CD4-positive, alpha-beta T cell (primary cell): ENCODE measurements at regions of chr17 and their contacts with region 1.

Region 1: GRCh38 chr17:28371245-28372202 is at the start of gene SARM1:
- DNase-seq: peak; percentile 53 to 92 (median 74)
- ATAC-seq: peak; percentile 85
- H3K4me3 ChIP-seq: peak within 1 kb of the TSS; percentile 83
- H3K4me3 Mint-ChIP-seq: peak within 1 kb of the TSS; percentile 98
- H3K27ac ChIP-seq: peak within 1 kb of the TSS; percentile 59 to 91
- H3K27ac Mint-ChIP-seq: peak within 1 kb of the TSS; percentile 75
- H3K4me1 ChIP-seq: peaks cover 22% of the 10 kb centered on the region
- H3K4me1 Mint-ChIP-seq: peaks cover 26% of the 10 kb centered on the region
- H3K27me3 ChIP-seq: no peaks in the 10 kb centered on the region
- H3K27me3 Mint-ChIP-seq: no peaks in the 10 kb centered on the region
- CTCF ChIP-seq: no peak
- total RNA-seq, gene SARM1: 12.5 to 15.4 TPM

Region 2: DNA sequence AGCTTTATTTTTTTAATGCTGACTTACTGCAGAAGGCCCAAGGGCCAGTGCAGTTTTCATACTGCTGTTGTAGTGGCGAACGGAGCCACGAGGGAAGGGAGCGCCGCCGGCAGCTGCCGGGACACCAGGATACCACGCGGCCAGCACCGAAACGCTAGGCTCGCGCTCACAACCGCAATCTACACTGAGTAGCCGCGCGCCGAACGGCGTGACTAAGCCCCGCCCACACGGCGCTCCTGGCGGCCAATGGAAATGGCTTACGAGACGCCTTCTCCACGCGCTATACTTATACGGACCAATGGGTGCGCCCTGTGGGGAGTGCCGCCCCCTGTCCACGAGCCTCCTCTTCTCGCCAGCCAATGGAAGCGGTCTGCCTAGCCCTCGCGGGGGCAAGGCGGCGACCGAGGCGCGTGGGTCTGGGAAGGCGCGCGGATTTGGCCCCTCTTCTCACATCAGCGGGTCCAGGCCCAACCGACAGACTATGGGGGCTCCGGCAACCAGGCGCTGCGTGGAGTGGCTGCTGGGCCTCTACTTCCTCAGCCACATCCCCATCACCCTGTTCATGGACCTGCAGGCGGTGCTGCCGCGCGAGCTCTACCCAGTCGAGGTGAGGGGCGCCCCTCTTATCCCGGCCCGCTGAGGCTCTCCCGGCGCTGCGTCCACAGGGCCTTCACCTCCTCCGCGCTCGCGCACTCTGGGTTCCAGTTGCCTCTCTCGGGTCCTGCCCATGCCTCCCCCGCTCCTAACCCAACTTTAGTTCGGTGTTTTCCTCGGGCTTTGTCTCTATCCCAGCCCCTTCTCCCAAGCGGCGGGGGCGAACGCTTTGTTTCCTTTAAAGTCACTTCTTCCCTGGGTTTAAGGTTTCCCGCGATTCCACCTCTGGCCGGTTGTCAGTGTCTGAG is 52.5 kb before region 1 on chr17 and contains the start of gene TMEM97:
- CTCF ChIA-PET with region 1: no interaction called
- POLR2A ChIA-PET with region 1: interaction called, 6 read pairs
- intact Hi-C with region 1: loop called in 1 of 2 experiments (anchors 2 kb)
- DNase-seq: peak; percentile 84 to 97 (median 92)
- ATAC-seq: peak; percentile 98
- H3K4me3 ChIP-seq: peak within 1 kb of the TSS; percentile 73
- H3K4me3 Mint-ChIP-seq: peak within 1 kb of the TSS; percentile 96
- H3K27ac ChIP-seq: no peak within 1 kb of the TSS
- H3K27ac Mint-ChIP-seq: peak within 1 kb of the TSS; percentile 79
- H3K4me1 ChIP-seq: peaks cover 20% of the 10 kb centered on the region
- H3K4me1 Mint-ChIP-seq: peaks cover 24% of the 10 kb centered on the region
- H3K27me3 ChIP-seq: no peaks in the 10 kb centered on the region
- H3K27me3 Mint-ChIP-seq: no peaks in the 10 kb centered on the region
- CTCF ChIP-seq: no peak
- total RNA-seq, gene TMEM97: 2.6 to 3.7 TPM

Region 3: DNA sequence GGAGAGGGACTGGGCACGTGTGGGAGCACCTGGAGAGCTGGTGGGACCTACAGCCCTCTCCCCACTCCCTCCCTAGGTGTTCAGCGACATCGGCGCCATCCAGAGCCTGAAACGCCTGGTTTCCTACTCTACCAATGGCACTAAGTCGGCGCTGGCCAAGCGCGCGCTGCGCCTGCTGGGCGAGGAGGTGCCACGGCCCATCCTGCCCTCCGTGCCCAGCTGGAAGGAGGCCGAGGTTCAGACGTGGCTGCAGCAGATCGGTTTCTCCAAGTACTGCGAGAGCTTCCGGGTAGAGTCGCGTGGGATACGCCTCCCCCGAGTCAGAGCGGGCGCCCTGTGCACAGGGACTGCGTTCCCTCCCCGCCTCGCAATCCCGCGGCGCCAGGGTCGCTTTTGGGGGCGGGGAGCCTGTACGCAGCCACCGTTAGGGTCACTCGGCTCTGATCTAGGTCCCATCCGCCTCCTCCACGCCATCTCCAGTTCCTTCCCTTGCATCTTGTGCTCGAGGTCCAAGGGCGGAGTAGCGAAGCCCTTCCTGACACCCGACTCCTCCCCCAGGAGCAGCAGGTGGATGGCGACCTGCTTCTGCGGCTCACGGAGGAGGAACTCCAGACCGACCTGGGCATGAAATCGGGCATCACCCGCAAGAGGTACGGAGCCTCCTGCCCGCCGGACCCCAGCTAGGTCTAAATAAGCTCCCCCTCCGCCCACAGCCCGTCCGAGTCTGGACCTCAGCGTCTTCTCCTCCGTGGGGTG is 12.9 kb after region 1 on chr17:
- CTCF ChIA-PET with region 1: no interaction called
- POLR2A ChIA-PET with region 1: interaction called, 31 read pairs
- intact Hi-C with region 1: no loop called
- DNase-seq: peak in 13 of 14 experiments; percentile 44 to 78 (median 58)
- ATAC-seq: peak; percentile 93
- H3K4me3 ChIP-seq: peak overlapping the region; percentile 94
- H3K4me3 Mint-ChIP-seq: peak overlapping the region; percentile 94
- H3K27ac ChIP-seq: peak overlapping the region in 1 of 2 donors; percentile 17
- H3K27ac Mint-ChIP-seq: peak overlapping the region; percentile 64
- H3K4me1 ChIP-seq: peaks cover 29% of the 10 kb centered on the region
- H3K4me1 Mint-ChIP-seq: peaks cover 36% of the 10 kb centered on the region
- H3K27me3 ChIP-seq: no peaks in the 10 kb centered on the region
- H3K27me3 Mint-ChIP-seq: peaks cover 8% of the 10 kb centered on the region
- CTCF ChIP-seq: no peak